ENCODE measurements at regions of chr15 and their contacts with region 1.

Region 1: DNA sequence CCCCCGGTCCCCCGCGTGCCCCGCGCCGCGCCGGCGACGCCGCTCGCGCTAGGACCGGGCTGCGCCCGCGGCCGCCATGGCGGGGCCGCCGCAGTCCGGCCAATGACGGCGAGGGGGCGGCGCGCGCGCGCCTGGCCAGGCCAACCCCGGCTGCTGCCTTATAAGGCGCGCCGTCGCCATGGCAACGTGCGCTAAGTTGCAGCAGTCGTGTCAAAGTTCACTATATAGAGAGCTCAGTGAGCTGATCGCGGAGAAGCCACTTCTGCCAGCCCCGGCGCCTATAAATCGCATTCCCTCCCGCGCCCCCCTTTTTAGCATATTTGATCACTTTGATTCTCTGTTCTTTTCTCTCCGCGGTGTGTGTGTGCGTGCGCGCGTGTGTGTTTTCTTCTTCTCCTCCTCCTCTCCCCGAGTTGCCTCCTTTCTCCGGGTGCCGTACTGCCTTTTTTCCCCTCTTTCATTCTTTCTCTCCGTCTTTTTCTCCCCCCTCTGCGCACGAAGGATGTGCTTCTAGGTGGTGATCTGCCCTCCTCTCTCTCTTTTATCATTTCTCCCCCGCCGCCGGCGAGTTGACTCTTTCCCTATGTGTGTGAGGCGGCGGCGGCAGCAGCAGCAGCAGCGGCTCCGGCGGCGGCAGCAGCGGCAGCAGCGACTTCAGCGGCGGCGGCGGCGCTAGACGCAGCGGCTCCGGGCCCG is at the start of gene NR2F2:
- DNase-seq: peak; percentile 93
- H3K4me3 ChIP-seq: peak within 1 kb of the TSS; percentile 90
- H3K27ac ChIP-seq: peak within 1 kb of the TSS; percentile 91
- H3K4me1 ChIP-seq: peaks cover 36% of the 10 kb centered on the region
- H3K27me3 ChIP-seq: no peaks in the 10 kb centered on the region
- CTCF ChIP-seq: no peak
- total RNA-seq, gene NR2F2: 48.4 and 72.1 TPM in 2 replicates

Region 2: GRCh38 chr15:95635666-95636065 is 694.9 kb before region 1 on chr15:
- CTCF ChIA-PET with region 1: interaction called, 5 read pairs
- POLR2A ChIA-PET with region 1: no interaction called
- intact Hi-C with region 1: loop called (anchors 10 kb)
- DNase-seq: no peak
- H3K4me3 ChIP-seq: no peak overlapping the region
- H3K27ac ChIP-seq: peak overlapping the region; percentile 71
- H3K4me1 ChIP-seq: peaks cover 13% of the 10 kb centered on the region
- H3K27me3 ChIP-seq: no peaks in the 10 kb centered on the region
- CTCF ChIP-seq: no peak

Region 3: DNA sequence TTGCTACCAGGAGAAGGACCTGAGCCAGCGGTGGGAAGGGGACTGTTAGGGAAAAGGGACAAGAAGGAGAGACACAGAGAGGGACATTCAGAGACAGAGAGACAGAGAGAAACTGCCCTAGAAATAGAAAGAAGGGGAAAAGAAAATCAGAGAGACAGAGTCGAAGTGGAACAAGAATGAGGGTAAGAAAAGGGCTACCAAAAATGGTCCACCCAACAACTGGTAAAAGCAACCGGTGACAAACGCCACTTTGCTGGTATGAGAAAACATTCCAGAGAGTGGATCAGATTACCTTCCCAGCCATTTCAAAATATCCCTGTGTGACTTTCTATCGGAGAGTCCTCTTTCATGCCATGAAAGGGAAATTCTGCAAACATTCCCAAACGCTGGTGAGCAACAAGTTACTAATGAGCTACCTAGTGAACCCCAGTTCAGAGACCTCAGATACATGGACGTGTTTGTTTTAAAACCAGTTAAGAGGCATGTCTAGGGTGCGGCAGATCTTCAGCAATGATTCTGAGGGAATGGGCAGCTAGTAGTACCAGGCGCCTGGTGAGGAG is 418.5 kb before region 1 on chr15:
- CTCF ChIA-PET with region 1: no interaction called
- POLR2A ChIA-PET with region 1: no interaction called
- intact Hi-C with region 1: loop called (anchors 2 kb)
- DNase-seq: peak; percentile 38 to 47
- H3K4me3 ChIP-seq: no peak overlapping the region
- H3K27ac ChIP-seq: no peak overlapping the region
- H3K4me1 ChIP-seq: no peaks in the 10 kb centered on the region
- H3K27me3 ChIP-seq: no peaks in the 10 kb centered on the region
- CTCF ChIP-seq: no peak

Region 4: DNA sequence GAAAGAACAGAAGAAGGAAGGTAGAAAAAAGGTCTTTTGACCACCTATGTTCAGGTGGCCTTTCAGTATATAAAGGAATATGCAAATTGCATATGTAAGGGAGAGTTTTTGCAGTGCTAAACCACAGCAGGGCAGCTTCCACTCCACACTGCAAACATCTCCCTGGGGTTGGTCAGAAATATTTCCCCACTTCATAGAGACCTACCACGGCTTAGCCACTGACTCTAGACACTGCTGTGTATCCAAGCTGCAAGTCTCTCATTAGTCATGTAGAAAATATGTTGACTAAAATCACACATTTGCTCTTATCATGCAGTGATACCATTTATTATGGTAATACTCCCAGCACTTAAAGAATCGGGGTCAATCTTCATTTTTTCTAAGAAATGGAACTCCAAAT is 215.0 kb before region 1 on chr15:
- CTCF ChIA-PET with region 1: no interaction called
- POLR2A ChIA-PET with region 1: interaction called, 6 read pairs
- intact Hi-C with region 1: loop called (anchors 5 kb)
- DNase-seq: peak; percentile 18 to 50
- H3K4me3 ChIP-seq: no peak overlapping the region
- H3K27ac ChIP-seq: no peak overlapping the region
- H3K4me1 ChIP-seq: peaks cover 9% of the 10 kb centered on the region; the same call in 1 of the 2 replicates
- H3K27me3 ChIP-seq: no peaks in the 10 kb centered on the region
- CTCF ChIP-seq: no peak

Region 5: GRCh38 chr15:96261575-96262034 is 69.0 kb before region 1 on chr15:
- CTCF ChIA-PET with region 1: interaction called, 5 read pairs
- POLR2A ChIA-PET with region 1: interaction called, 17 read pairs
- intact Hi-C with region 1: loop called (anchors 1 kb)
- DNase-seq: no peak
- H3K4me3 ChIP-seq: no peak overlapping the region
- H3K27ac ChIP-seq: no peak overlapping the region
- H3K4me1 ChIP-seq: peaks cover 33% of the 10 kb centered on the region
- H3K27me3 ChIP-seq: no peaks in the 10 kb centered on the region
- CTCF ChIP-seq: no peak

Region 6: DNA sequence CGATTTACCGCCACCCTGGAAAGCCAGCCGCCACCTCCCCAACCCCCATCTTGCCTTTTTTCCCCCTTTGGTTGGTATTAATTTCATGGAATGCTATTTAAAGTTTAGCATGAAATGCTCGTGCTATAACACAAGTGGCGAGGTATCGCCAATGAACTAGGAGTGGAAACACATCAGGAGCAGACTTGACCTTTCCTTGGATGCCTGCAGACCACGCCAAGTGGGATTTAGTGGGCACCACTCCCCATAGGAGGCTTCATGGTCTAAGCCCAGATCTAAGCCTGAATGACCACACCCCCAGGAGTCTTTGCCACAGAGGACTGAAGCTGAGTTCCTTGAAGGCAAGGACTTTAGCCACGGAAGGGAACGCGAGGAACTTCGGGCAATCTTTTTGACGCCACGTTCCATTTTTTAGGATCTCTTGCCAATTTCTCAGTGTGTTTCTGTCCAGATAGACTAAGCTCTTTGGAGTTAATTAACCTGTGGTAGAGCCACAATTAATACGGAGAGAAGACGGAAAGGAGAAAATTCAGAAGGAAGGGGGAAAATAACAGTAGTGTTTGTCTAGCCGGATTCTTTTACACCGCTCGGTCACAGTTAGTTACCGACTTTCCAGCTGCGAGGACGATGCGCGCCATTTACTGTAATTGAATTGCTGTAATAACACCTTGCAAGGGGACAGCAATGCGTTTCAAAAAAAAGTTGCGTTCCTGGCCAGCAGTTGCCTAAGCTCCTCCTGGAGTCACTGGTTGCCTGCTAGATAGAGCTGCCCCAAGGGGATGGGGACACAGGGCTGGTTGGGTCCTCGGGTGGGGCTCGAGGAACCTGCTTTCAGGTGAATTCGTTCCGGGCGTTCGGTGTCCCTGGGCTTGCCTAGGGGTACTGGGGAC is 37.0 kb after region 1 on chr15:
- CTCF ChIA-PET with region 1: no interaction called
- POLR2A ChIA-PET with region 1: no interaction called
- intact Hi-C with region 1: no loop called
- DNase-seq: no peak
- H3K4me3 ChIP-seq: no peak overlapping the region
- H3K27ac ChIP-seq: no peak overlapping the region
- H3K4me1 ChIP-seq: no peaks in the 10 kb centered on the region
- H3K27me3 ChIP-seq: no peaks in the 10 kb centered on the region
- CTCF ChIP-seq: no peak

Measured in PC-9 (cell line).